CD14-positive monocyte (primary cell): ENCODE measurements at regions of chr11 and their contacts with region 1.

Region 1: DNA sequence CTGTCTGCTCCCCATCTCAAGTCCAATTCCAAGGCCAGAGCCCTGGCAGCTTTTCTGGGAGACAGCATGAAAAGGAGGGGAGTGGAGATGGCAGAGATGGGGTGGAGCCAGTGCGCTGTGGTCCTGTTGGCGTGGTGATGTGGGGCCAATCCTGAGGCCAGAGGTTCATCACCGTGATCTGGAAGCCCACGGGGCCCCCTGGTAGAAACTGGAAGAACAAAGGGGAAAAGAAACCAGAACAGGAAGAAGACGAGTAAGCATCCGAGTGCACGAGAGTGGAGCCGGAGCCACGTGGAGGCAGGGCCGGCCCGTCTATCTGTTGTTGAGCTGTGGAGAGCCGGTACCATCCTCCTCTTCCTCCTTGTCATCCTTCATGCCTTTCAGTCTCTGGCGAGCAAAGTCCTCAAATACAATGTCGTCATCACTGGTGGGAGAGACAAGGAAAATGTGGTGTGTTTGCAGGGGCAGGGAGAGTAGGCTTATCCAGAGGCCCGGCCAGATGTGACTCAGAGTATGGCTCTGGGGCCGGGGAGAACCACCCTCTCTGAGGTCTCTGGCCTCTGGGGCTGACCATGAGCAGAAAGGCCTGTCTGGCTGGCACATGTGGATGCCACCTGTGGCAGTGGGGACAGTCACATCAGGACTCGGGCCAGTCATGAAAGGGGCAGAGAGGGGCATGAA is 25.4 kb downstream of the TPBGL start:
- DNase-seq: peak; percentile 51 to 67 (median 58)
- H3K4me3 ChIP-seq: no peak overlapping the region
- H3K4me3 Mint-ChIP-seq: peak overlapping the region; percentile 45 to 78
- H3K27ac ChIP-seq: peak overlapping the region; percentile 55 to 73
- H3K27ac Mint-ChIP-seq: peak overlapping the region; percentile 81 to 94 (median 87)
- H3K4me1 ChIP-seq: peaks cover 68 to 69% of the 10 kb centered on the region in 2 donors
- H3K4me1 Mint-ChIP-seq: peaks cover 72% of the 10 kb centered on the region
- H3K27me3 ChIP-seq: no peaks in the 10 kb centered on the region
- H3K27me3 Mint-ChIP-seq: peaks cover 0 to 2% (median 1%) of the 10 kb centered on the region in 3 donors
- CTCF ChIP-seq: no peak

Region 2: GRCh38 chr11:75677275-75677674 is 411.3 kb after region 1 on chr11:
- intact Hi-C with region 1: loop called in 1 of 2 experiments (anchors 5 kb)
- DNase-seq: no peak
- H3K4me3 ChIP-seq: no peak overlapping the region
- H3K4me3 Mint-ChIP-seq: no peak overlapping the region
- H3K27ac ChIP-seq: no peak overlapping the region
- H3K27ac Mint-ChIP-seq: no peak overlapping the region
- H3K4me1 ChIP-seq: no peaks in the 10 kb centered on the region
- H3K4me1 Mint-ChIP-seq: no peaks in the 10 kb centered on the region
- H3K27me3 ChIP-seq: peaks cover 10 to 26% of the 10 kb centered on the region in 2 donors
- H3K27me3 Mint-ChIP-seq: peaks cover 26 to 51% (median 31%) of the 10 kb centered on the region in 3 donors
- CTCF ChIP-seq: no peak